Posterior cingulate gyrus (tissue), 11 donors: ENCODE measurements at regions of chr21 and their contacts with region 1.

Region 1: DNA sequence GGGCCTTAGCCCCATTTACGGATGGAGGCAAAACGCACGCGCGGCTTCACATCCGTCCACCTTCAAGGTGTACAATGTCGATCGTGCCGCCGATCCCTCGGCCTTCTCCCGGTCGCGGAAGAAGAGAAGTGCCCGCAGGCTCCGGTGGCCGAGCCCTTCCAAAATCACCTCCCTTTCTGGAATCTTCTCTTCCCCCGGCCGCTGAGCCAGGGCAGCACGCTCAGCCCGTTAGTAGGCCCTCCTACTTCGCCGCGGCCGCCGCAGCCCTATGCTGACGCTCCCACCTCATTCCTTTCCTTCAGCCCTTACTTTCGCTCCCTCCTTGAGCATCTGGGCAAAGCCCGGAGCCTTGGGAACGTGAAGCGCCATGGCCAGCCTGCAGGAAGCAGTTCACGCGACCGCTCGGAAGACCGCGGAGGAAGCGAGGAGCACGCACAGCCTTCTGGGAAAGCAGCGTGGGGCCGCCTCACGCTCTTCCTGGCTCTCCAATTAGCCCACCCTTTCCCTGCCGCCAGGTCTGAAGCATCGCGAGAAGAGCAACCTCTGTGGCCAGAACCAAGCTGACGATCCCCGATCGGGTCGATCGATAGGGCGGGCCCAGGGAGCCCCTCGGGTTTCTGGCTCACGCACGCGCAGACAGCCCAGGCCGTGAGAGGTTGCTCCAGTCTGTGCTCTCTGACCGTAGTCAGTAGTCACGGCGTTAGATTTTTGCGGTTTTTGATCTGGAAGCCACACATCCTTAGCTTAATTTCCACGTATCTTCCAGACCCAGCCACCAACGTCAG is at the start of gene CCT8:
- DNase-seq: peak; percentile 97 to 100 (median 98)

Region 2: DNA sequence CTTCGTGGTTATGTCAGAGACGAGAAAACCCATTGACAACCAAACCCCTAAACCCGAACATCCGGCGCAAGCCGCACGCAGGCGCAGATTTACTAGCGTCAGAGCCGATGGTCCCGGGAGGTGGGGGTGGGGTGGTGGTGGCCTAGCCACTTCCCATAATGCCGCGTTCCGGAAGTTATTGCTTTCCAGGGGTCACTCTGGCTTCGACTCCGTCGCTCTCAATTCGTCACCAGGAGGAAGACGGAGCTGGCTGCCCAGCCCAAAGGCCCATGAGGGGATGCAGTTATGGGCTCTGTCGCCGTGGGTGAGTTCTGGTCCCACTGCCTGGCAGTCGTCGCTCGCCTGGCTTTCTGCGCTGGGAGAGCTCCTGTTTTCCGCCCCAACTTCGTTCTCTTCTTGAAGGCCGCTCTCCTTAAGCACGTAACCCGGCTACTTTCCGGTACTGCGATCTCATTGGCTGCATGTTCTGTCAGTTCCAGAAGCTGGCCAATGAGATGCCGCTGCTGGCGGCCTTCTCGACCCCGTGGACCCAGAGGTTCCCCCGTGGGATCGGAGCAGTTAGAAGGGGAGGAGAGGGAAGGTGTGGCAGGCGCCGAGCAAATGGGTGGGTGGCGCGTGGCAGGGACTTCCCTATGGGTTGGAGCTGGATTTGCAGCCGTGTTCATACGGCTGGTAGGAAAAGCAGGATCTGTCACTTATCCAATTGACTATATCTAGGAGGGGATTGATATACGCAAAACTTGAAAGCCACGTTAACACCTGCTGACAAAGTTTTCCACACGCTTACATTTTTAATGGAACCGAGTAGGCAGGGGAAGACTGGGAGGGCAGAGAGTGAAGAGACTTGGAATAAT is 48.7 kb before region 1 on chr21 and contains the start of gene USP16:
- intact Hi-C with region 1: loop called (anchors 2 kb)
- DNase-seq: peak; percentile 92 to 99 (median 94)

Region 3: DNA sequence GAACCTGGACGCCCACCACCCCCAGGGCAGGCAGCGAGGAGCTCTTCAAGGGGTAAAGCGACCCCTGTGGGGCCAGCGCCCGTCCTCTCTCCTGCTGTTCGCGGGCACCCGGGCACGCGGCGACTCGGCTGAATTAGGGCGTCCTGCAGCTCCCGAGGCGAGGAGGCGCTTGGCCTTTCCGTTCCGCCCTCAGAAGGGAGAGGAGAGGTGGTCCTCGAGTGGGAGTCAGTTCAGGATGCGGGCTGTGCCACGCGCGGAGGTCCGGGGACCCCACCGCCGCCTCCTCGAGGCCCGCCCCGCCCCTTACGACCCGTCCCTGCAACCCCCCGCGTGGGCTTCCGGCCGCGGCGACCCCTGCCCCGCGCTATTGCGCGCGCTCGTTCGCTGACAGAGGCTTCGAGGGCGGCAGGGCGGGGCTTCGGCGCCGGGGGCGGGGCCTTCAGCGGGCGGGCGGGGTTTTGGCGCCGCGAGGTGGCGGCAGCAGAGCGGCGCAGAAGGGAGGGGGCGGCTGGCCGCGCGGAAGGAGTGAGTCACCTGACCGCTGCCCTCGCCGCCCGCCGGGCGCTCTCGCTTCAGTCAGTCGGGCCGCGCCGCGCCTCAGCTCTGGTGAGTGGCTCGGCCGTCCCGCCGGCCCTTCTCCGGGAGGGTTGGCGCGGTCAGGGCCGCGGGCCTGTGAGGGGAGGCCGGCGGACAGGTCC is 225.1 kb after region 1 on chr21 and contains the start of gene BACH1:
- intact Hi-C with region 1: loop called (anchors 5 kb)
- DNase-seq: peak; percentile 69 to 98 (median 82)